ENCODE measurements at regions of chr11 and their contacts with region 1.

Region 1: GRCh38 chr11:35337136-35337918 is 82.0 kb downstream of the SLC1A2 start:
- DNase-seq: peak; percentile 85
- ATAC-seq: peak; percentile 86
- H3K4me3 ChIP-seq: no peak overlapping the region
- H3K27ac ChIP-seq: peak overlapping the region; percentile 47
- H3K4me1 ChIP-seq: peaks cover 29% of the 10 kb centered on the region
- H3K27me3 ChIP-seq: no peaks in the 10 kb centered on the region
- CTCF ChIP-seq: no peak
- EP300 ChIP-seq: peak in 1 of 2 experiments; percentile 44; a peak in 1 of 4 replicates
- POLR2A ChIP-seq: no peak
- RAD21 ChIP-seq: no peak

Region 2: GRCh38 chr11:35288817-35289541 is 48.3 kb before region 1 on chr11:
- CTCF ChIA-PET with region 1: no interaction called
- POLR2A ChIA-PET with region 1: no interaction called
- in situ Hi-C with region 1: no loop called
- intact Hi-C with region 1: no loop called
- DNase-seq: no peak
- ATAC-seq: no peak
- H3K4me3 ChIP-seq: no peak overlapping the region
- H3K27ac ChIP-seq: no peak overlapping the region
- H3K4me1 ChIP-seq: no peaks in the 10 kb centered on the region
- H3K27me3 ChIP-seq: no peaks in the 10 kb centered on the region
- CTCF ChIP-seq: no peak
- EP300 ChIP-seq: no peak
- POLR2A ChIP-seq: no peak
- RAD21 ChIP-seq: no peak

Region 3: DNA sequence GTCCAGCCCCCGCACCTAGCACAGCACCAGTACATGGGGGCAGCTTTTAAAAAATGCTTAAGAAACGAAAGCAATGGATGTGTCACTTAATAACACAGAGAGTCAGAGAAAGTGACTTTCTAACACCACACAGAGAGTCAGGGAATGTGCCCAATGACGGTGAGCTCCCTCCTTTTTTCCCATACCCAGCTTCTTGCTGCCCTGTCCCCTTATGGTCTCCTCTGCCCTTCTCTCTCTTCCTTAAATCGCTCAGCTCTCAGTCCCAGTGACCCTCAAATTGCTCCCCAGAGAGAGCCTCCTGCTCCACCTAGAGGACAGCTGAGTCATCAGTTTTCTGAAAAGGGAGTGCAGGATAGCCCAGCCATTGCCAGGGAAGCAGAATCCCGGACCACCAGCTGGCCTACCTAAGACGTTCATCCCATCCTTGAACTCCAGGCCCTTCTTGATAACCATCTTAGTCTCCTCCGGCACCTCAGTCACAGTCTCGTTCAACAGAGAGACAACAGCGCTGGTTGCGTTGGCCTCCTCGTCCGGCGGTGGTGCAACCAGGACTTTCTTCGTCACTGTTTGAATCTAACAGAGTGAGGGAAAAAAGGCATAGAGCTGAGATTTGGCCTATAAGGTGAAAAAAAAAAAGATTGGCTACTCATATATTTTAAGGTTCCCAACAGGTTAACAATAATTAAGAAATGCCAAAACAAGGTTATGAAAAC is 31.5 kb before region 1 on chr11:
- CTCF ChIA-PET with region 1: no interaction called
- POLR2A ChIA-PET with region 1: interaction called, 13 read pairs
- in situ Hi-C with region 1: no loop called
- intact Hi-C with region 1: no loop called
- DNase-seq: peak; percentile 12
- ATAC-seq: peak; percentile 20; the same call in 1 of the 3 replicates
- H3K4me3 ChIP-seq: no peak overlapping the region
- H3K27ac ChIP-seq: peak overlapping the region; percentile 87
- H3K4me1 ChIP-seq: peaks cover 26% of the 10 kb centered on the region
- H3K27me3 ChIP-seq: no peaks in the 10 kb centered on the region
- CTCF ChIP-seq: peak; percentile 47
- EP300 ChIP-seq: no peak
- POLR2A ChIP-seq: no peak
- RAD21 ChIP-seq: no peak

Region 4: GRCh38 chr11:36048496-36049247 is 711.3 kb after region 1 on chr11:
- CTCF ChIA-PET with region 1: no interaction called
- POLR2A ChIA-PET with region 1: no interaction called
- in situ Hi-C with region 1: no loop called
- intact Hi-C with region 1: no loop called
- DNase-seq: no peak
- ATAC-seq: no peak
- H3K4me3 ChIP-seq: no peak overlapping the region
- H3K27ac ChIP-seq: no peak overlapping the region
- H3K4me1 ChIP-seq: no peaks in the 10 kb centered on the region
- H3K27me3 ChIP-seq: peaks cover 0 to 1% of the 10 kb centered on the region in 2 experiments; a peak in 1 of 5 replicates
- CTCF ChIP-seq: no peak
- EP300 ChIP-seq: no peak
- POLR2A ChIP-seq: no peak
- RAD21 ChIP-seq: no peak

Region 5: GRCh38 chr11:36156161-36156816 is 819.0 kb after region 1 on chr11:
- CTCF ChIA-PET with region 1: no interaction called
- POLR2A ChIA-PET with region 1: no interaction called
- in situ Hi-C with region 1: no loop called
- intact Hi-C with region 1: no loop called
- DNase-seq: no peak
- ATAC-seq: no peak
- H3K4me3 ChIP-seq: no peak overlapping the region
- H3K27ac ChIP-seq: no peak overlapping the region
- H3K4me1 ChIP-seq: no peaks in the 10 kb centered on the region
- H3K27me3 ChIP-seq: 0 out of 5 replicates have a peak, but pooled peaks cover 0 to 3% of the 10 kb centered on the region in 2 experiments
- CTCF ChIP-seq: no peak
- EP300 ChIP-seq: no peak
- POLR2A ChIP-seq: no peak
- RAD21 ChIP-seq: no peak